Natural killer cell (primary cell): ENCODE measurements at regions of chr2 and their contacts with region 1.

Region 1: GRCh38 chr2:110812726-110813645 is 80.6 kb downstream of the ACOXL start:
- DNase-seq: no peak
- ATAC-seq: peak in 1 of 3 donors; percentile 21
- H3K4me3 ChIP-seq: no peak overlapping the region
- H3K4me3 Mint-ChIP-seq: no peak overlapping the region
- H3K27ac ChIP-seq: no peak overlapping the region
- H3K27ac Mint-ChIP-seq: peak overlapping the region in 1 of 2 donors; percentile 67
- H3K4me1 ChIP-seq: peaks cover 8% of the 10 kb centered on the region
- H3K4me1 Mint-ChIP-seq: peaks cover 6 to 12% of the 10 kb centered on the region in 2 donors
- H3K27me3 ChIP-seq: no peaks in the 10 kb centered on the region
- H3K27me3 Mint-ChIP-seq: peaks cover 0 to 11% of the 10 kb centered on the region in 2 donors
- CTCF ChIP-seq: no peak

Region 2: GRCh38 chr2:110770959-110771431 is 42.0 kb before region 1 on chr2:
- intact Hi-C with region 1: no loop called
- DNase-seq: no peak
- ATAC-seq: no peak
- H3K4me3 ChIP-seq: no peak overlapping the region
- H3K4me3 Mint-ChIP-seq: no peak overlapping the region
- H3K27ac ChIP-seq: no peak overlapping the region
- H3K27ac Mint-ChIP-seq: no peak overlapping the region
- H3K4me1 ChIP-seq: no peaks in the 10 kb centered on the region
- H3K4me1 Mint-ChIP-seq: no peaks in the 10 kb centered on the region
- H3K27me3 ChIP-seq: no peaks in the 10 kb centered on the region
- H3K27me3 Mint-ChIP-seq: peaks cover 5 to 17% of the 10 kb centered on the region in 2 donors
- CTCF ChIP-seq: no peak

Region 3: GRCh38 chr2:110853507-110853906 is 40.5 kb after region 1 on chr2:
- intact Hi-C with region 1: loop called (anchors 2 kb)
- DNase-seq: peak in 1 of 2 donors; percentile 80
- ATAC-seq: peak; percentile 23 to 50 (median 23)
- H3K4me3 ChIP-seq: no peak overlapping the region
- H3K4me3 Mint-ChIP-seq: peak overlapping the region; percentile 88
- H3K27ac ChIP-seq: no peak overlapping the region
- H3K27ac Mint-ChIP-seq: peak overlapping the region; percentile 92 to 94
- H3K4me1 ChIP-seq: peaks cover 76% of the 10 kb centered on the region
- H3K4me1 Mint-ChIP-seq: peaks cover 86 to 93% of the 10 kb centered on the region in 2 donors
- H3K27me3 ChIP-seq: no peaks in the 10 kb centered on the region
- H3K27me3 Mint-ChIP-seq: peaks cover 0 to 14% of the 10 kb centered on the region in 2 donors
- CTCF ChIP-seq: peak; percentile 78

Region 4: DNA sequence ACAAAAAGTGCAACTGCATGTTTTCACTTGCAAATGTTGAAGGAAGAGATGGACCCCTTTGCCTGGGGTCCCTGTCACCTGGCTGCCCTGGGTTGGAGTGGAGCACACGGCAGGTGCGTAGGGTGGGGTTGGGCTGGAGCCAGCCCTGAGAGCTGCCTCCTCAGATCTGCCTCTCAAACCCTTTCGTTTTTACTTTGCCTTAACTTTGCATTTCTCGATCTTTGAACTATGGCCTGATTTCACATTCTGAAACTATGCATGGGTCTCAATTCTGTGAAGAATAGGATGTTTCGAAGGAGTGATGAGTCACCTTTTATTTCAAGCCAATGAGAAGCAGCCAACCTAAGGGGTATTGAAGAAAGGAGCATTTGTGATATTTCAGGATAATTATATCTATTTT is 52.2 kb after region 1 on chr2:
- intact Hi-C with region 1: no loop called
- DNase-seq: peak in 1 of 2 donors; percentile 21
- ATAC-seq: no peak
- H3K4me3 ChIP-seq: no peak overlapping the region
- H3K4me3 Mint-ChIP-seq: no peak overlapping the region
- H3K27ac ChIP-seq: no peak overlapping the region
- H3K27ac Mint-ChIP-seq: no peak overlapping the region
- H3K4me1 ChIP-seq: peaks cover 9% of the 10 kb centered on the region
- H3K4me1 Mint-ChIP-seq: peaks cover 6 to 7% of the 10 kb centered on the region in 2 donors
- H3K27me3 ChIP-seq: no peaks in the 10 kb centered on the region
- H3K27me3 Mint-ChIP-seq: peaks cover 22 to 59% of the 10 kb centered on the region in 2 donors
- CTCF ChIP-seq: no peak

Region 5: GRCh38 chr2:111135910-111136297 is 322.9 kb after region 1 on chr2:
- intact Hi-C with region 1: loop called (anchors 5 kb)
- DNase-seq: peak in 1 of 2 donors; percentile 25
- ATAC-seq: peak in 1 of 3 donors; percentile 56
- H3K4me3 ChIP-seq: no peak overlapping the region
- H3K4me3 Mint-ChIP-seq: no peak overlapping the region
- H3K27ac ChIP-seq: no peak overlapping the region
- H3K27ac Mint-ChIP-seq: no peak overlapping the region
- H3K4me1 ChIP-seq: peaks cover 6% of the 10 kb centered on the region
- H3K4me1 Mint-ChIP-seq: peaks cover 0 to 24% of the 10 kb centered on the region in 2 donors
- H3K27me3 ChIP-seq: no peaks in the 10 kb centered on the region
- H3K27me3 Mint-ChIP-seq: no peaks in the 10 kb centered on the region
- CTCF ChIP-seq: no peak